CD14-positive monocyte (primary cell): ENCODE measurements at regions of chr11 and their contacts with region 1.

Region 1: GRCh38 chr11:77411717-77412441 is 62.0 kb downstream of the PAK1 start:
- DNase-seq: peak; percentile 72 to 80 (median 76)
- H3K4me3 ChIP-seq: peak overlapping the region; percentile 44 to 79 (median 72)
- H3K4me3 Mint-ChIP-seq: peak overlapping the region; percentile 95 to 100
- H3K27ac ChIP-seq: peak overlapping the region; percentile 77 to 89
- H3K27ac Mint-ChIP-seq: peak overlapping the region; percentile 83 to 95 (median 93)
- H3K4me1 ChIP-seq: peaks cover 50 to 60% of the 10 kb centered on the region in 2 donors
- H3K4me1 Mint-ChIP-seq: peaks cover 58% of the 10 kb centered on the region
- H3K27me3 ChIP-seq: no peaks in the 10 kb centered on the region
- H3K27me3 Mint-ChIP-seq: peaks cover 0 to 1% (median 0%) of the 10 kb centered on the region in 3 donors
- CTCF ChIP-seq: no peak

Region 2: GRCh38 chr11:77400773-77401449 is 11.0 kb before region 1 on chr11:
- intact Hi-C with region 1: no loop called
- DNase-seq: no peak
- H3K4me3 ChIP-seq: no peak overlapping the region
- H3K4me3 Mint-ChIP-seq: no peak overlapping the region
- H3K27ac ChIP-seq: peak overlapping the region in 1 of 2 donors; percentile 65
- H3K27ac Mint-ChIP-seq: peak overlapping the region in 5 of 7 donors; percentile 5 to 66 (median 30)
- H3K4me1 ChIP-seq: peaks cover 8 to 44% of the 10 kb centered on the region in 2 donors
- H3K4me1 Mint-ChIP-seq: peaks cover 35% of the 10 kb centered on the region
- H3K27me3 ChIP-seq: no peaks in the 10 kb centered on the region
- H3K27me3 Mint-ChIP-seq: no peaks in the 10 kb centered on the region
- CTCF ChIP-seq: no peak

Region 3: DNA sequence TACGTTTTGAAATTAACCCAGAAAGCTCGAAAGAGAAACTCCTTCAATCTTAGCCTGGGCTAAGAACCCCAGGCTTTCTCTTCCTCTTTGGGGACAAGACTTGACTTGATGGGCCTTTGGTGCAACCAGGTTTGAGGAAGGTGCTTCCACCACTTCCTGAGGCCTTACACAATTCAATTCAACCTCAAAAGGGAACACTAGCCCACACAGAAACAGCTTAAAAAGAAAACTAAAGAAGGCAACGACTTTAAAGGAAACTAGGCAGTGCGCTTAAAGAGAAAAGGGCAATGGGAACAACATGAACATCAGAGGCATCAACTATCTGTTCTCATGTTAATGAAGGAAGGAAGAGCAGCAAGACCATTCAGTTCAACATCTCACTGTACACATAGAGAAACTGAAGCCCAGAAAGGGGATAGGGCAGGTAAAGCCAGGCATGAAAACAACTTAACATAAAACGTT is 37.2 kb after region 1 on chr11:
- intact Hi-C with region 1: loop called (anchors 5 to 10 kb)
- DNase-seq: peak; percentile 60 to 87 (median 85)
- H3K4me3 ChIP-seq: peak overlapping the region in 2 of 3 experiments; percentile 23 to 49
- H3K4me3 Mint-ChIP-seq: peak overlapping the region; percentile 55 to 82
- H3K27ac ChIP-seq: peak overlapping the region in 1 of 2 donors; percentile 71
- H3K27ac Mint-ChIP-seq: peak overlapping the region; percentile 85 to 96 (median 91)
- H3K4me1 ChIP-seq: peaks cover 73 to 75% of the 10 kb centered on the region in 2 donors
- H3K4me1 Mint-ChIP-seq: peaks cover 74% of the 10 kb centered on the region
- H3K27me3 ChIP-seq: no peaks in the 10 kb centered on the region
- H3K27me3 Mint-ChIP-seq: peaks cover 0 to 2% (median 0%) of the 10 kb centered on the region in 3 donors
- CTCF ChIP-seq: no peak

Region 4: GRCh38 chr11:77457340-77457739 is 45.5 kb after region 1 on chr11:
- intact Hi-C with region 1: loop called in 1 of 2 experiments (anchors 10 kb)
- DNase-seq: no peak
- H3K4me3 ChIP-seq: no peak overlapping the region
- H3K4me3 Mint-ChIP-seq: no peak overlapping the region
- H3K27ac ChIP-seq: no peak overlapping the region
- H3K27ac Mint-ChIP-seq: peak overlapping the region in 1 of 7 donors; percentile 15
- H3K4me1 ChIP-seq: peaks cover 23 to 24% of the 10 kb centered on the region in 2 donors
- H3K4me1 Mint-ChIP-seq: peaks cover 31% of the 10 kb centered on the region
- H3K27me3 ChIP-seq: no peaks in the 10 kb centered on the region
- H3K27me3 Mint-ChIP-seq: peaks cover 0 to 4% (median 2%) of the 10 kb centered on the region in 3 donors
- CTCF ChIP-seq: no peak

Region 5: DNA sequence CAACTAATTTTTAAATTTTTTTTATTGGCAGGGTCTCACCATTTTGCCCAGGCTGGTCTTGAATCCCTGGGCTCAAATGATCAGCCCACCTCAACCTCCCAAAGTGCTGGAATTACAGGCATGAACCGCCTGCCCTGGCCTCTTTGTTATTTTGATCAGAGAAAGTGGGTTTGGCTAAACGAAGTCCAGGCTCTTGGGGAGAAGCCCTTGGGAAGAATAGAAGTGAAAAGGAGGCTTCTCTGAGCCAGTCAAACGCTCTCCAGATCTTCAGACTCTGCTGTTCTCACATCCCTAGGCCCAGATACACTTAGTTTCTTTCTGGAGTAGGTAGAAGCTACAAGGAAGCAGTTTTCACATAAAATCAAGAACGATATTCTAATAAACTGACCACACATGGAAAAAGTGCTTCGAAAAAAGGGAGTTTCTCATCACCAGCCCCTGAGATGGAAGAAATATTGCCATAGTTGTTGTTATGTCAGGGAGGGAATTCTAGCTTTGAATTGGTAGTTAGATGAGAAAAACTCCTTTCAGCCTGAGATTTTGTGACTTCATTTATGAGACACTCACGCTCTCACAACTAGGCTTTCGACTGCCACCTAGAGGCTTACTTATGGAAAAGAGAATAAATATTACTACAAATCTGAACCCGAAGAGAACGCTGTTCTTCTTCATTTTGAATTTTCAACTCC is 136.1 kb after region 1 on chr11:
- intact Hi-C with region 1: loop called in 1 of 2 experiments (anchors 10 kb)
- DNase-seq: peak; percentile 43 to 64 (median 58)
- H3K4me3 ChIP-seq: no peak overlapping the region
- H3K4me3 Mint-ChIP-seq: peak overlapping the region in 1 of 2 donors; percentile 59
- H3K27ac ChIP-seq: no peak overlapping the region
- H3K27ac Mint-ChIP-seq: no peak overlapping the region
- H3K4me1 ChIP-seq: no peaks in the 10 kb centered on the region
- H3K4me1 Mint-ChIP-seq: peaks cover 11% of the 10 kb centered on the region
- H3K27me3 ChIP-seq: no peaks in the 10 kb centered on the region
- H3K27me3 Mint-ChIP-seq: peaks cover 0 to 1% (median 0%) of the 10 kb centered on the region in 3 donors
- CTCF ChIP-seq: peak; percentile 70